ENCODE measurements at regions of chr16 and their contacts with region 1.

Region 1: DNA sequence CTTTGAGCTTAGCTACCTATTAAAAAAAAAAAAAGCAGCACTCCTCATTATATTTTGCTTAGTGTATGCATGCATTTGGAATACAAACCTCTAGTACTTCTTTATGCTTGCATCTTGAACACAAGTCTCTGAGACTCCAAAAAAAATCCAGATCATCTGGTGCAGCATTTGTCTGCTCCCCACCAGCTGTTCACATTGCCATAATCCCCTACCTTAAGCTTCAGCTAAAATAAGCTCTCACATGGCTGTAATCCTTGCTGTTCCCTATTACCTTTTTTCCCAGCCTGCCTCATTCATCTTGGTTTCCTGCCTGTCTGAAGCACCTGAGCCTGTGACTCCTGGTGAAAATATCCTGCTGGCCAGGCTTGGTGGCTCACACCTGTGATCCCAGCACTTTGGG is 7.5 kb upstream of the NFATC2IP start:
- DNase-seq: no peak
- ATAC-seq: no peak
- H3K4me3 ChIP-seq: no peak overlapping the region
- H3K27ac ChIP-seq: no peak overlapping the region
- H3K4me1 ChIP-seq: peaks cover 3 to 21% of the 10 kb centered on the region in 2 experiments
- H3K27me3 ChIP-seq: no peaks in the 10 kb centered on the region
- CTCF ChIP-seq: no peak
- POLR2A ChIP-seq: no peak
- RAD21 ChIP-seq: no peak

Region 2: DNA sequence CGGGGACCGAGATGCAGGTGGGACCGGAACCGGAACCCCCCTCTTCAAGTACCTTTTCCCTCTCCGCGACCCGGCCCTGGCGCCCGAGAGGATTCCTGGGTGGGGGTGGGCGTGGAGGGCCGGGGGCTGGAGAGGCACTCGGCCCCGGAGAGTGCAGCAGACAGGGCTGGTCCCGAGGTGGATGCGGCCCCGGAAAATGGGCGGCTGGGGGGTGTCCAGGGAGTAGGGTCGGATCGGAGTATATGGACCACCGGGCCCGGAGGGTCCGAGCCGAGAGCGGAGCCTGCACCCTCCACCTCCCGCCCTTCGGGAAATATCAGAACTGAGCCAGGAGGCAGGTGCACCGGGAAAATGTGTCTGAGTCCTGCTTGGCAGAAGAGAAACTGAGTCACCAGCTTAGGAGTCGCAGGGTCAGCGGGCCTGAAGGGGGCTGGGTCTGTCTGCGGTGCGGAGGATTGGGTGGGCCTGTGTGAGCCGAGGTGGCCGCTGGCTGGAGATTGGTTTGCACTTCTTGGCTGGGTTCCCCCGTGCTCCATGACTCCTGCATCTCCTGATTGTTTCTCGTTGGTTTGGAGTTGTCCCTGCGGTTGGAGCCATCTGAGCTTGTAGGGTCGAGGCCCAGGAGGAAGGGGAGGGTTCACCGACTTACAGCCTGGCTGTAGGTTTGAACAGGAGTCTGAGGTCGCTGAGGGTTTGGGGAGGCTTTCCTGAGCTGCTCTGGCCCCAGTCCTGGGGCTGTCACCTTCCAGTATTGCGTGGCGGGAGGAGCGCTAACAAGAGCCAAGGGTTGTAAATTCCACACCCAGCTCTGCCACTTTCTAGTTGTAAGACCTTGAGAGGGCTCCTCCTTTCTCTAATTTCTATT is 79.1 kb before region 1 on chr16:
- CTCF ChIA-PET with region 1: interaction called, 4 read pairs
- POLR2A ChIA-PET with region 1: interaction called, 6 read pairs
- RAD21 ChIA-PET with region 1: no interaction called
- intact Hi-C with region 1: loop called (anchors 1 kb)
- DNase-seq: no peak
- ATAC-seq: peak; percentile 9
- H3K4me3 ChIP-seq: peak overlapping the region; percentile 94
- H3K27ac ChIP-seq: peak overlapping the region; percentile 84
- H3K4me1 ChIP-seq: peaks cover 16 to 24% of the 10 kb centered on the region in 2 experiments
- H3K27me3 ChIP-seq: no peaks in the 10 kb centered on the region
- CTCF ChIP-seq: no peak
- POLR2A ChIP-seq: no peak
- RAD21 ChIP-seq: no peak

Region 3: DNA sequence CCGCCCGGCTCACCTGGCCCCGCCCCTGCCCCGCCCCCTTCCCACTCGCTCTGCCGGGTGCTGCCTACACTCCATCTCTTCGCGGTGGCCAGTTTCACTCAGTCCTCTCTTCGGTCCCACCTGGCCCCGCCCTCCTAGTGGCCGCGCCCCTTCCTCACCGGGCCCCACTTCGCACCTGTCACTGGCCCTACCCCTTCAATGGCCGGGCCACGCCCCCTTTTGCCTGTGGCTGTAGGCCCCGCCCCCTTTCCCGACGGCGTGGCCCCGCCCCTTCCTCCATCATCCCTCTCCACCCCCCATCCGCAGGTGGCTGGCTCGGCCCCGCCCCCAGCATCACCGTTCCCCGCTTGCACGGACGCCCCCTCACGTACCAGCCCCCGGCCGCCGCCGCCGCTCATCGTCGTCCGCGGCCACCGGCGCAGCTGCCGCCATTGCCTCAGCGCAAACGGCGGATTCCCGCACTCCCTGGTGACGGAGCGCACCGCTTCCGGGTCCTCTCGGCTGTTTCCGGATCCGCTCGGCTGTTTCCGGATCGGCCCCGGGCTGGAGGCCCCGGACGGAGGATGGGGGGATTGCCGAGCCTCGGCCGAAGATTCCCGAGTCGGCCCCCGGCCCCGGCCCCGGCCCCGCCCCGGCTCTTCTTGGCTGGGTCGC is 18.4 kb before region 1 on chr16 and contains the start of gene RABEP2:
- CTCF ChIA-PET with region 1: interaction called, 10 read pairs
- POLR2A ChIA-PET with region 1: interaction called, 4 read pairs
- RAD21 ChIA-PET with region 1: no interaction called
- intact Hi-C with region 1: loop called (anchors 1 kb)
- DNase-seq: peak; percentile 92
- ATAC-seq: peak; percentile 88
- H3K4me3 ChIP-seq: peak within 1 kb of the TSS; percentile 60 to 77
- H3K27ac ChIP-seq: peak within 1 kb of the TSS; percentile 98
- H3K4me1 ChIP-seq: peaks cover 7 to 20% of the 10 kb centered on the region in 2 experiments
- H3K27me3 ChIP-seq: no peaks in the 10 kb centered on the region
- CTCF ChIP-seq: no peak
- POLR2A ChIP-seq: no peak
- RAD21 ChIP-seq: no peak
- total RNA-seq, gene RABEP2: 13.4 TPM